ENCODE measurements at regions of chr6 and their contacts with region 1.

Region 1: DNA sequence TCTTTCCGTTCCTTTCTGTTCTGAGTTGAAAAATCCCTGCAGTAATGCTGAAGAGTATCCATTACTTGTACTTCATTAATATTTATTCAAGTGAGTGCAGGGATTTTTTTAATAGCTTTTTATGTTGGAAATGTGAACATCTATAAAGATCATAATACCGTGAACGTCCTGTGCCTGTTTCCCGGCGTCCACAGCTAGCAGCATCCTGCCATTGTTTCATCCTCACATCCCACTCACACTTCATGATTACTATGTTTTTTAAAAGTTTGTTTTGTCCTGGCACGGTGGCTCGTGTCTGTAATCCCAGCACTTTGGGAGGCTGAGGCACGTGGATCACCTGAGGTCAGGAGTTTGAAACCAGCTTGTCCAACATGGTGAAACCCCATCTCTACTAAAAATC is 54.3 kb downstream of the SASH1 start:
- DNase-seq: no peak
- ATAC-seq: no peak
- H3K4me3 ChIP-seq: no peak overlapping the region
- H3K4me3 Mint-ChIP-seq: no peak overlapping the region
- H3K27ac ChIP-seq: no peak overlapping the region
- H3K27ac Mint-ChIP-seq: no peak overlapping the region
- H3K4me1 ChIP-seq: no peaks in the 10 kb centered on the region
- H3K4me1 Mint-ChIP-seq: no peaks in the 10 kb centered on the region
- H3K27me3 ChIP-seq: peaks cover 0 to 10% of the 10 kb centered on the region in 2 experiments
- H3K27me3 Mint-ChIP-seq: peaks cover 7 to 16% of the 10 kb centered on the region in 2 donors

Region 2: DNA sequence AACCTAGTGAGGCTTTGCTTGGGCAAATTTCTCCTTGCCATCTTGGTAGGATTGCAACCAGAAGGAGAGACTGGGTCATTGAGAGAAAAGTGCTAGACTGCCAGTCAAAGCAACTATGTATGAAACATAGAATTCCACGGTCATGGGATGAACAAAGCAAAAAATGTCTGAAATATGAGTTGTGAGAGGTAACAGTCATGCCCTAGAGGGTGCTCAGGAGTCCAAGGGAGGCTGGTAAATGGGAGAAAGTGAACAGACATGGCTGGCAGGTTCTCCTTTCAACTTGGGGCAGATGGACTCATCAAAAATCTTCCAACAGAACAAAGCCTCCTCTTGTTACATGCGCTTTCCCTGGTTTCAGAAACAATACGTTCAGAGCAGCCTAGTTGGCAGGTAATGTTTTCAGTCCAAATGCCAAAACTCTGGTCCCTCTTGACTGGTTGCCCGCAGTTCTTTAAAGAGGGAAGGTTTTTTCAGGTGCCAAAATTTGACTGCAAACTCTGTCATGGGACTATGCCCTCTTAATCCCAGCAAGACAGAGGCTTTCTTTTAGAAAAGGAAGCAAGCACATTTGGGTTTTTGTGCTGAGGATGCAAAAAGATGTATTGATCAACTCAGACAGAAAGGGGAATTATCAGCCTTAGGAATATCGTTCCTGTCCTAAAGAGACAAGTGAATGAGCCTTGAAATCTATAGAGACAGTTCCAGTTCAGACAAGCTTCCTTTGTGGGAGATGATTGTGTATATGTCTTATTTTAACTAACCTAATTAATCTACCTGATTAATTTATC is 122.8 kb before region 1 on chr6:
- CTCF ChIA-PET with region 1: no interaction called
- POLR2A ChIA-PET with region 1: no interaction called
- DNase-seq: no peak
- ATAC-seq: no peak
- H3K4me3 ChIP-seq: no peak overlapping the region
- H3K4me3 Mint-ChIP-seq: no peak overlapping the region
- H3K27ac ChIP-seq: no peak overlapping the region
- H3K27ac Mint-ChIP-seq: no peak overlapping the region
- H3K4me1 ChIP-seq: no peaks in the 10 kb centered on the region
- H3K4me1 Mint-ChIP-seq: no peaks in the 10 kb centered on the region
- H3K27me3 ChIP-seq: peaks cover 2 to 9% of the 10 kb centered on the region in 2 experiments
- H3K27me3 Mint-ChIP-seq: peaks cover 16 to 23% of the 10 kb centered on the region in 2 donors

Region 3: DNA sequence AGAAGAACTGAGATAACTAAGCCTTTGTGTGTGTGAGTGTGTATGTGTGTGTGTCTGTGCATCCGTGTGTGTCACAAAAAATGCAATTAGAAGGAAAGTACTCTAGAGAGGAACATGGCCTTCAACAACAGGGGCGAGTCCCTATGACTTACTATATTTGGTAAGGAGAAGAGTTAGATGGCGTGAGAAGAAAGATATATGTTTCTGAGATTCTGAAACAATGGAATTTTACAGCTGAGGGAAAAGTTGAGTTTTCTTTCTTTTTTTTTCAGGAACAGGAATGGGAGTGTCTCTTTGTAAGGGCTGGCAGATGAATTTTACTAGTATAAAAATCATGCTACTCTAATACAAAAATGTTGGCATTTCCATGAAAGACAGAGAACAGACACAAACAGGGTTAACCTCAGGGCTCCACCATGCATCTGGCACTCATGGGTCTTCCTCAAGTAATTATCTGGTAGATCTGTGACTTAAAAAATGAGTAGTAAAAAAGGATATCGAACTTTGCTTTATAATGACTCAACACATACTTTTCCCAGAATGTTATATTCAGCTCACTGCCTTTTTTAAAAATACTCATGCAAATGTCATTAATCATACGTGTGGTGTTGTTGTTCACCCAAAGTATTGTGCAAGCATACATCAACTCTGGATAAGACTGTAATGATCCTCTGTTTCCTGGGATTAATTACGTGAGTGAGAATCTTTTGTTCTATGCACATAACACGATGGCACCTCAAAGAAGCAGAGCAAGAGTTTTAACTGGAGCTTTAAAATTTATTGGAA is 67.1 kb before region 1 on chr6:
- CTCF ChIA-PET with region 1: no interaction called
- POLR2A ChIA-PET with region 1: no interaction called
- DNase-seq: no peak
- ATAC-seq: no peak
- H3K4me3 ChIP-seq: no peak overlapping the region
- H3K4me3 Mint-ChIP-seq: no peak overlapping the region
- H3K27ac ChIP-seq: no peak overlapping the region
- H3K27ac Mint-ChIP-seq: no peak overlapping the region
- H3K4me1 ChIP-seq: no peaks in the 10 kb centered on the region
- H3K4me1 Mint-ChIP-seq: no peaks in the 10 kb centered on the region
- H3K27me3 ChIP-seq: peaks cover 0 to 11% of the 10 kb centered on the region in 2 experiments
- H3K27me3 Mint-ChIP-seq: peaks cover 13 to 20% of the 10 kb centered on the region in 2 donors

Region 4: GRCh38 chr6:148414836-148415235 is 17.9 kb after region 1 on chr6:
- CTCF ChIA-PET with region 1: no interaction called
- POLR2A ChIA-PET with region 1: interaction called in 1 of 2 experiments, 18 read pairs
- DNase-seq: no peak
- ATAC-seq: no peak
- H3K4me3 ChIP-seq: no peak overlapping the region
- H3K4me3 Mint-ChIP-seq: no peak overlapping the region
- H3K27ac ChIP-seq: no peak overlapping the region
- H3K27ac Mint-ChIP-seq: no peak overlapping the region
- H3K4me1 ChIP-seq: no peaks in the 10 kb centered on the region
- H3K4me1 Mint-ChIP-seq: no peaks in the 10 kb centered on the region
- H3K27me3 ChIP-seq: peaks cover 0 to 5% of the 10 kb centered on the region in 2 experiments
- H3K27me3 Mint-ChIP-seq: peaks cover 6 to 22% of the 10 kb centered on the region in 2 donors

Measured in T-cell (primary cell).